ENCODE measurements at regions of chr11 and their contacts with region 1.

Region 1: DNA sequence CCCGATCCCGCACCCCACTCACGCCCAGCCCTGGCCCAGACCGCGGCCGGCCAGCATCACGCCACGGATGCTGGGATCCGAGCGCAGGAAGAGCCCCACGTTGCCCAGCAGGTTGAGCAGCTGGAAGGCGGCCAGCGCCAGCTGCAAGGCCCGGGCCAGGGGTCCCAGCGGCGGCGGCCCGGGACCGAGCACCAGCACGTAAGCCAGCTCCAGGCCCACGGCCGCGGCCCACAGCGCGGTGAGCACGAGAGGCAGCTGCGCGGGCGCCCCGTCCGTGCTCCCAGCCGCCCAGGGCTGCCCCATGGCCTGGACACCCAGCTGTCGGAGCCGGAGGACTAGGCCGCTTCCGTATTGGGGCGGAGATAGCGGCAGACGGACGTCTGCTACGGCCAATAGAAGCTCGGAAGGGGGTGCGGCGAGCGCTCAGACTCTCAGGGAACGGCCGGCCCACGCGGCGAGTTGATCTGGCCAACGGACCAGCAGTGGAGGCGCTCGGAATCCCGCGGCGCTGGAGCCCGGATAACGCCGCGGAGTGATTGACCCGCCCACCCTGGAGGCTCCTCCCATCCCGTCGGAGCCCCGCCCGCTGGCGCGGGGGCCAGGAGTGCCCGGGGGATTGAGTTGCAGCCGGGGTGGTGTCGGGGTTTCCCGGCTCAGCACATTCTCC is at the start of gene ZDHHC24:
- DNase-seq: peak; percentile 90
- ATAC-seq: peak; percentile 86
- H3K4me3 Mint-ChIP-seq: peak within 1 kb of the TSS; percentile 83
- H3K27ac Mint-ChIP-seq: peak within 1 kb of the TSS; percentile 65
- H3K4me1 Mint-ChIP-seq: peaks cover 25% of the 10 kb centered on the region
- H3K27me3 Mint-ChIP-seq: peaks cover 7% of the 10 kb centered on the region
- total RNA-seq, gene ZDHHC24: 22.1 to 23.0 TPM

Region 2: GRCh38 chr11:66183494-66184048 is 362.3 kb before region 1 on chr11:
- POLR2A ChIA-PET with region 1: no interaction called
- DNase-seq: no peak
- ATAC-seq: no peak
- H3K4me3 Mint-ChIP-seq: no peak overlapping the region
- H3K27ac Mint-ChIP-seq: no peak overlapping the region
- H3K4me1 Mint-ChIP-seq: peaks cover 9% of the 10 kb centered on the region
- H3K27me3 Mint-ChIP-seq: no peaks in the 10 kb centered on the region

Region 3: GRCh38 chr11:66568124-66568916 is 22.5 kb after region 1 on chr11 and contains the start of gene CTSF:
- POLR2A ChIA-PET with region 1: interaction called, 10 read pairs
- DNase-seq: peak; percentile 73
- ATAC-seq: peak; percentile 88
- H3K4me3 Mint-ChIP-seq: peak within 1 kb of the TSS; percentile 75
- H3K27ac Mint-ChIP-seq: no peak within 1 kb of the TSS
- H3K4me1 Mint-ChIP-seq: peaks cover 5% of the 10 kb centered on the region
- H3K27me3 Mint-ChIP-seq: peaks cover 25% of the 10 kb centered on the region
- total RNA-seq, gene CTSF: 13.5 to 14.2 TPM